ENCODE measurements at regions of chr15 and their contacts with region 1.

Region 1: GRCh38 chr15:96838081-96838480 is 507.6 kb downstream of the NR2F2 start:
- DNase-seq: peak; percentile 95
- H3K4me3 ChIP-seq: no peak overlapping the region
- H3K27ac ChIP-seq: peak overlapping the region; percentile 99
- H3K4me1 ChIP-seq: peaks cover 36% of the 10 kb centered on the region
- H3K27me3 ChIP-seq: no peaks in the 10 kb centered on the region
- CTCF ChIP-seq: no peak

Region 2: DNA sequence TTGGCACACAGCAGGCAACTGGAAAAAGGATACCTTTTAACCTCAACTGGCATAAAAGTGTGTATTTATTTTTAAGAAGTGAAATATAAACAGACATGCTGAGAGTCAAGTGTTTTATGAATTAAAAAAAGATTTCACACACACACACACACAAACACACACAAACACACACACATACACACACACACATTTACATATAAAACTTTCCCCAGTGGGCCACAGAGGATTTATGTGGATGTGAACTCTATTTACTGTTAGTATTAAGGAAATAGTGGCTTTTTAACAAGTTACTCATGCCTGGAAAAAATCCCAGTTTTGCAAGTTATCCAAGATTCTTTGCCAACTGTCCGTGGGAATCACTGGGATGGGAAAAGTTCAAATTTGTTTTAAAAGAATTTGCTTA is 1233.4 kb before region 1 on chr15:
- CTCF ChIA-PET with region 1: no interaction called
- POLR2A ChIA-PET with region 1: no interaction called
- intact Hi-C with region 1: loop called (anchors 5 kb)
- DNase-seq: peak; percentile 45
- H3K4me3 ChIP-seq: no peak overlapping the region
- H3K27ac ChIP-seq: peak overlapping the region; percentile 78
- H3K4me1 ChIP-seq: peaks cover 50% of the 10 kb centered on the region
- H3K27me3 ChIP-seq: no peaks in the 10 kb centered on the region
- CTCF ChIP-seq: no peak

Region 3: GRCh38 chr15:96356494-96357455 is 481.3 kb before region 1 on chr15:
- CTCF ChIA-PET with region 1: interaction called, 6 read pairs
- POLR2A ChIA-PET with region 1: no interaction called
- intact Hi-C with region 1: loop called (anchors 2 kb)
- DNase-seq: peak; percentile 92
- H3K4me3 ChIP-seq: peak overlapping the region; percentile 60
- H3K27ac ChIP-seq: peak overlapping the region; percentile 93
- H3K4me1 ChIP-seq: peaks cover 70% of the 10 kb centered on the region
- H3K27me3 ChIP-seq: no peaks in the 10 kb centered on the region
- CTCF ChIP-seq: peak; percentile 97

Region 4: GRCh38 chr15:96687388-96688107 is 150.5 kb before region 1 on chr15:
- CTCF ChIA-PET with region 1: no interaction called
- POLR2A ChIA-PET with region 1: interaction called, 10 read pairs
- intact Hi-C with region 1: loop called (anchors 2 kb)
- DNase-seq: peak; percentile 55
- H3K4me3 ChIP-seq: no peak overlapping the region
- H3K27ac ChIP-seq: peak overlapping the region; percentile 55
- H3K4me1 ChIP-seq: peaks cover 37% of the 10 kb centered on the region
- H3K27me3 ChIP-seq: no peaks in the 10 kb centered on the region
- CTCF ChIP-seq: peak; percentile 35; the same call in 1 of the 2 replicates

Region 5: GRCh38 chr15:96893159-96893906 is 55.3 kb after region 1 on chr15:
- CTCF ChIA-PET with region 1: interaction called, 8 read pairs
- POLR2A ChIA-PET with region 1: no interaction called
- intact Hi-C with region 1: loop called (anchors 1 kb)
- DNase-seq: peak; percentile 90
- H3K4me3 ChIP-seq: no peak overlapping the region
- H3K27ac ChIP-seq: peak overlapping the region; percentile 89
- H3K4me1 ChIP-seq: peaks cover 77% of the 10 kb centered on the region
- H3K27me3 ChIP-seq: no peaks in the 10 kb centered on the region
- CTCF ChIP-seq: peak; percentile 91

Region 6: GRCh38 chr15:97234851-97235610 is 396.9 kb after region 1 on chr15:
- CTCF ChIA-PET with region 1: interaction called, 15 read pairs
- POLR2A ChIA-PET with region 1: interaction called, 6 read pairs
- intact Hi-C with region 1: loop called (anchors 1 kb)
- DNase-seq: peak; percentile 93
- H3K4me3 ChIP-seq: peak overlapping the region; percentile 44
- H3K27ac ChIP-seq: peak overlapping the region; percentile 94
- H3K4me1 ChIP-seq: peaks cover 46% of the 10 kb centered on the region
- H3K27me3 ChIP-seq: no peaks in the 10 kb centered on the region
- CTCF ChIP-seq: peak; percentile 95

Region 7: DNA sequence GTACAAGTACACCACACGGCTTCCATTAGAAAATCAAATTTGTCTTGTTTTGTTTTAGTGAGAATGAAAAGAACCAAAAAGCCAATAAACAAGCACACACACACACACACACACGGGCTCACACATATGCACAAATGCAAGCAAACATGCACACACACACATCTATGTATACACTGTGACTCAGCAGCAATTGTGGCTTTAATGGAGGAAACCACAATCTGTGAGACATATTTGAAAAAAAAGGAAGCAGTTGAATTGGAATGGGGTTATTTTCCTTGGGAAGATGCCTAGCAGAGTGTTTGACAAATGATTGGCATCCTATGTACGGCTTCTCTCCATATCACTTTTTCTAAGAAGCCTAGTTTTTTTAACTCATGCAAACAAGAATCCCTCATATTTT is 921.3 kb after region 1 on chr15:
- CTCF ChIA-PET with region 1: interaction called, 3 read pairs
- POLR2A ChIA-PET with region 1: no interaction called
- intact Hi-C with region 1: loop called (anchors 10 kb)
- DNase-seq: no peak
- H3K4me3 ChIP-seq: no peak overlapping the region
- H3K27ac ChIP-seq: no peak overlapping the region
- H3K4me1 ChIP-seq: no peaks in the 10 kb centered on the region
- H3K27me3 ChIP-seq: no peaks in the 10 kb centered on the region
- CTCF ChIP-seq: no peak

Measured in A673 (cell line).